ENCODE measurements at regions of chrX and their contacts with region 1.

Region 1: GRCh38 chrX:11533211-11533651 is 132.5 kb downstream of the ARHGAP6 start:
- DNase-seq: no peak
- ATAC-seq: peak; percentile 80
- H3K4me3 ChIP-seq: no peak overlapping the region
- H3K27ac ChIP-seq: no peak overlapping the region
- H3K4me1 ChIP-seq: peaks cover 1 to 3% of the 10 kb centered on the region in 2 donors
- H3K27me3 ChIP-seq: no peaks in the 10 kb centered on the region

Region 2: GRCh38 chrX:11143931-11144678 is 389.1 kb before region 1 on chrX:
- intact Hi-C with region 1: loop called (anchors 2 kb)
- DNase-seq: no peak
- ATAC-seq: peak; percentile 76
- H3K4me3 ChIP-seq: no peak overlapping the region
- H3K27ac ChIP-seq: no peak overlapping the region
- H3K4me1 ChIP-seq: no peaks in the 10 kb centered on the region
- H3K27me3 ChIP-seq: no peaks in the 10 kb centered on the region

Region 3: DNA sequence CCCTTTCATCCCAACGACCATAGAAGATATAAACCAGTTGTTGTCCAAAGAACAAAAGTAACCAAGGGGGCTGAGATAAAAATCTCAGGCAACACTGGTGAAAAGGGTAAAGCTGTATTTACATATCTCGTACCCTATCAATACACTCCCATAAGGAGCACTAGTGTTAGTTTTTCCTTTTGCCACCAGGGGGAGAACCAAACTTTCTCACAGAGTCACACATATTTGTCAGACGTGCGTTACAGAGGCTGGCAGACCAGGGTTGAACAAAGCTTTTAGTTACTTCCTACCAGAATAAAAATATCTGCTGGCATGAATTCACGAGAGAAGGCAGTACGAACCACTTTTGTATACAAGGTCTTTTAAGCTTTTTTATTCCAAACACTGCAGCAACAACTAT is 151.8 kb before region 1 on chrX:
- intact Hi-C with region 1: loop called (anchors 2 kb)
- DNase-seq: peak in 1 of 2 donors; percentile 50
- ATAC-seq: peak; percentile 86
- H3K4me3 ChIP-seq: no peak overlapping the region
- H3K27ac ChIP-seq: peak overlapping the region in 1 of 2 donors; percentile 57
- H3K4me1 ChIP-seq: peaks cover 2 to 7% of the 10 kb centered on the region in 2 donors
- H3K27me3 ChIP-seq: no peaks in the 10 kb centered on the region

Region 4: DNA sequence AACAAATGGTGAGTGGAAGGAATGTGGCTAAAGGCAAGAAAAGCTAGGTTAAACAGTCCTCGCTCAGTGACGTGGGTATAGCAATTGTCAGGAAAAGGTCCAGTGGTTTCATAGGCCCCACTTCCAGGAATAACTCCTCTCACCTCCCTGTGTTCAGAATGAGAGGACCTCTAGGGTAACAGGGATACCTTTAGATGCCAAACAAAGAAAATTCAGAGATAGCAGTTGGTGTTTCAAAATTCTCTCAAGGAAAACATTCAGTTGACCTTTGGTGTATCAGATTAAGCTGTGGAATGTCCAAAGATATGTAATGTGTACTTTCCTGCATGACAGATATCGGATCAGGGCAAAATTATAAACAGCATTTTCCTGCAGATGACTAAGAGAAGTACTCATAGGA is 23.4 kb before region 1 on chrX:
- intact Hi-C with region 1: no loop called
- DNase-seq: no peak
- ATAC-seq: no peak
- H3K4me3 ChIP-seq: no peak overlapping the region
- H3K27ac ChIP-seq: no peak overlapping the region
- H3K4me1 ChIP-seq: no peaks in the 10 kb centered on the region
- H3K27me3 ChIP-seq: no peaks in the 10 kb centered on the region

Region 5: GRCh38 chrX:11724122-11725017 is 191.1 kb after region 1 on chrX:
- intact Hi-C with region 1: loop called (anchors 2 kb)
- DNase-seq: no peak
- ATAC-seq: peak; percentile 69
- H3K4me3 ChIP-seq: no peak overlapping the region
- H3K27ac ChIP-seq: no peak overlapping the region
- H3K4me1 ChIP-seq: no peaks in the 10 kb centered on the region
- H3K27me3 ChIP-seq: no peaks in the 10 kb centered on the region

Region 6: GRCh38 chrX:11770320-11770719 is 237.1 kb after region 1 on chrX:
- intact Hi-C with region 1: loop called (anchors 2 to 5 kb)
- DNase-seq: no peak
- ATAC-seq: peak; percentile 68
- H3K4me3 ChIP-seq: no peak overlapping the region
- H3K27ac ChIP-seq: no peak overlapping the region
- H3K4me1 ChIP-seq: no peaks in the 10 kb centered on the region
- H3K27me3 ChIP-seq: no peaks in the 10 kb centered on the region

Measured in aorta (tissue), 5 donors.